ENCODE measurements at regions of chr6 and their contacts with region 1.

Region 1: DNA sequence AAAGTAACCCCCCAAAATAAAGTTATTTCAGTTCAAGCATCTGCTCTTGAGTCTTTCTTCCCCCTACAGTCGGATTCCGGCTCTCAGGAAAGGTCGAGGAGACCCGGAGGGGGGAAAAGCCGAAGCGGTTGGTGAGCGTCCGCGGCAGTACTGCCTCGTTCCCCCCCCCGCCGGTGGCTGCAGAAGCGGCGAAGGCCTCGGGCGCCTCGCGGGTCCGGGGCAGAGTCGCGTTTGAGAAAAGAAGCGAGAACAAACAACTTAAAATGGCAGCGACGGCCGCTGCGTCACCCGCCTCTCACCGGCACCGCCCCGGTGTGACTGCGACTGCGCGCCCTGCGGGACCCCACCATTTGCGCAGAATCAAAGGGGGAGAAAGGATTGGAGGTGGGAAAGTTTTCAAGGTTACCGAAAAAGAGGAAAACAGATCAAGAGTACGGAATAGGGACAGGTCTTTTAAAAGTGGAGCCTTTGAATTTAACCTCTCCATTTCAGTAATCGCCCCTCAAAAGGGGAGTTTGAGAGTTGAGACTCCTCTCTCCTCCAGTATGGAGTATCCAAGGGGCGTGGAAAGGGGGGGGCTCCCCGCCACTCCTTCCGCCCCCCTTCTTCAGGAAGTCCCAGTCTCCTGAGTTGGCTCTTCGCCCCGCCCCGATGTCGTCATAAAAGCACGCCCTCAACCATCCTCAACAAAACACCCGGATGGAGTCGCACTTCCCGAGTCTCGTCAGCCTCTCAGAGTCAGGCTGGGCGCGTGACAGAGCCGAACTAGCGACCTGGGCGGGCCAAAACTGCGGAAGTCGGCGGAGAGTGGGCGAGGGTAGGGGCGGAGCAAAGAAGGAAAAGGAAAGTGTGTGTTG is 1.9 kb upstream of the C6orf62 start:
- DNase-seq: peak; percentile 100
- ATAC-seq: peak; percentile 88
- H3K4me3 Mint-ChIP-seq: peak overlapping the region; percentile 99
- H3K27ac Mint-ChIP-seq: peak overlapping the region; percentile 98
- H3K4me1 Mint-ChIP-seq: peaks cover 32% of the 10 kb centered on the region
- H3K27me3 Mint-ChIP-seq: no peaks in the 10 kb centered on the region

Region 2: DNA sequence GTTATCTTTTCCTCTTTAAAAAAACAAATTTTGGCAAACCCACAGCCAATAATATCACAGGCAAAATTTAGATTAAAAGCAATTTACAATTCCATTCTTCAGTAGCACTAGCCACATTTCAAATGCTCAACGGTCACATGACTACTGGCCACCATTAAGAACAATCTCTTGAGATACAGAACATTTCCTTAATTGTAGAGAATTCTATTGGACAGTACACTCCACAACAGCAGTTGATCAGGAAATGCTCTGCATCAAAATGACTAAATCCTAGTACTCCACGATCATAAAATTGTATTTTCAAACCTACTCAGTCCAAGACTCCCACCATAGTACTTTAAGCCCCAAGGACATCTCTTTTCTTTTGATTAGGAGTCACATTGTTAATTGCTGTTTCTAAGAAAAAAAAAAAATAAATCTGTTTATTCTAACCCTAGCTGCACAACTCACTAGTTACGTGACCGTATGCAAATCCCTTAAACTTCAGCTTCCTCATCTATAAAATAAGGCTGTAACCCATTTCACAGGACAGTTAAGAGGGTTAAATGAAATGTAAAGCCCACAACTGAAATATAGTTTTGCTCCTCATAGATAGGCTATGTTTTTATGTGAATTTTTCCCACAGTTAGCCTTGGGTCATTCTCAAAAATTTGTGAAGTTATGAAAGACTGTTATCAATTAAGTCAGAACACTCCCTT is 11.7 kb before region 1 on chr6:
- CTCF ChIA-PET with region 1: interaction called, 7 read pairs
- POLR2A ChIA-PET with region 1: interaction called, 3 read pairs
- intact Hi-C with region 1: loop called in 1 of 2 experiments (anchors 1 kb)
- DNase-seq: no peak
- ATAC-seq: no peak
- H3K4me3 Mint-ChIP-seq: no peak overlapping the region
- H3K27ac Mint-ChIP-seq: peak overlapping the region; percentile 56
- H3K4me1 Mint-ChIP-seq: peaks cover 53% of the 10 kb centered on the region
- H3K27me3 Mint-ChIP-seq: no peaks in the 10 kb centered on the region

Region 3: GRCh38 chr6:24743265-24743943 is 22.6 kb after region 1 on chr6:
- CTCF ChIA-PET with region 1: interaction called, 8 read pairs
- POLR2A ChIA-PET with region 1: interaction called, 23 read pairs
- intact Hi-C with region 1: loop called (anchors 1 kb)
- DNase-seq: peak; percentile 61
- ATAC-seq: peak; percentile 94
- H3K4me3 Mint-ChIP-seq: peak overlapping the region; percentile 17
- H3K27ac Mint-ChIP-seq: peak overlapping the region; percentile 82
- H3K4me1 Mint-ChIP-seq: peaks cover 28% of the 10 kb centered on the region
- H3K27me3 Mint-ChIP-seq: no peaks in the 10 kb centered on the region

Region 4: GRCh38 chr6:24766680-24767462 is 46.0 kb after region 1 on chr6:
- CTCF ChIA-PET with region 1: interaction called, 4 read pairs
- POLR2A ChIA-PET with region 1: no interaction called
- intact Hi-C with region 1: loop called in 1 of 2 experiments (anchors 2 kb)
- DNase-seq: no peak
- ATAC-seq: peak; percentile 76
- H3K4me3 Mint-ChIP-seq: no peak overlapping the region
- H3K27ac Mint-ChIP-seq: no peak overlapping the region
- H3K4me1 Mint-ChIP-seq: no peaks in the 10 kb centered on the region
- H3K27me3 Mint-ChIP-seq: no peaks in the 10 kb centered on the region